ENCODE measurements at regions of chr6 and their contacts with region 1.

Region 1: DNA sequence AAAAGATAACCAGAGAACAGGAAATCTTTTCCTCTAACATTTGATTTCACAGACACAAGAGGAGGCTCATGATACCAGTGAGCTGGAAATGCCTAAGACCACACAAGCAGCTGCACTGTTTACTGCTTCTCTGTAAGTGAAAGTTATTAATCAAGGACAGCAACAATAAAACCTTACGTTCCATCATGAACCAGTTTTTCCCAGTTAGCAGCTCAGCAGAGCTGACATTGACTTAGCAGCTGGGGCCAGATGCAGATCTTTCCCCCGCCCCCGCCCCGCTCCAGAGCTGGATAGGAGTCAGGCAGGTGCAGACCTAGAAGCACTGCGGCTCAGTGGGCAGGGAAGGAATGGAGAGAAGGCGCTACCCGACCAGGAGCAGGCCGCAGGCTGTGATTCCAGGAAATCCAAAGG is 275.2 kb downstream of the GMDS start:
- DNase-seq: no peak
- H3K4me3 ChIP-seq: no peak overlapping the region
- H3K27ac ChIP-seq: no peak overlapping the region
- H3K4me1 ChIP-seq: no peaks in the 10 kb centered on the region
- CTCF ChIP-seq: no peak

Region 2: GRCh38 chr6:1613688-1614447 is 356.3 kb before region 1 on chr6:
- CTCF ChIA-PET with region 1: no interaction called
- POLR2A ChIA-PET with region 1: no interaction called
- intact Hi-C with region 1: no loop called
- DNase-seq: no peak
- H3K4me3 ChIP-seq: no peak overlapping the region
- H3K27ac ChIP-seq: no peak overlapping the region
- H3K4me1 ChIP-seq: no peaks in the 10 kb centered on the region
- CTCF ChIP-seq: no peak

Region 3: GRCh38 chr6:1856381-1856780 is 113.8 kb before region 1 on chr6:
- CTCF ChIA-PET with region 1: no interaction called
- POLR2A ChIA-PET with region 1: no interaction called
- intact Hi-C with region 1: no loop called
- DNase-seq: peak; percentile 31
- H3K4me3 ChIP-seq: no peak overlapping the region
- H3K27ac ChIP-seq: no peak overlapping the region
- H3K4me1 ChIP-seq: peaks cover 16% of the 10 kb centered on the region
- CTCF ChIP-seq: peak; percentile 34

Region 4: GRCh38 chr6:1952726-1953360 is 17.3 kb before region 1 on chr6:
- CTCF ChIA-PET with region 1: no interaction called
- POLR2A ChIA-PET with region 1: no interaction called
- intact Hi-C with region 1: no loop called
- DNase-seq: no peak
- H3K4me3 ChIP-seq: no peak overlapping the region
- H3K27ac ChIP-seq: no peak overlapping the region
- H3K4me1 ChIP-seq: no peaks in the 10 kb centered on the region
- CTCF ChIP-seq: no peak

Region 5: DNA sequence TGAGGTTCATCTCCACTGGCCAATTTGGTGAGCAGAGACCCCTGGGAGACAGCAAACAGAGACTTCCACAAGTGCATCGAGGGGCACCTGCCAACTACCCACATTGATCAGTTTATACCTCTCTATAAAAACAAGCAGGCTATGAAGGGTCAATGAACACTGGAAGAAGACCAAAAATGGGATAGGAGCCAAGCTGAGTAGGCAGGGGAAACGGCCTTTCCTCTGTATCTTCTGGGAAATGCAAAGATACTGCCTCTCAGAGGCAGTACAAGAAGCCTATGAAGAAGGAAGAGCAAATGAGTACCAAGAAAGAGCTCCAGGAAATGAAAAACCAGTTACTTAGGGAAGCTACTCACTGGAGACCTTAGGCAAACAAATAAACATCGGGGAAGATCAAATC is 27.5 kb after region 1 on chr6:
- CTCF ChIA-PET with region 1: no interaction called
- POLR2A ChIA-PET with region 1: interaction called, 10 read pairs
- intact Hi-C with region 1: no loop called
- DNase-seq: no peak
- H3K4me3 ChIP-seq: no peak overlapping the region
- H3K27ac ChIP-seq: no peak overlapping the region
- H3K4me1 ChIP-seq: no peaks in the 10 kb centered on the region
- CTCF ChIP-seq: no peak

Measured in OCI-LY7 (cell line).